Breast epithelium (tissue), 4 donors: ENCODE measurements at regions of chr3 and their contacts with region 1.

Region 1: GRCh38 chr3:187739561-187740332 is 5.5 kb downstream of the BCL6 start:
- DNase-seq: peak; percentile 79 to 89
- H3K4me3 ChIP-seq: peak overlapping the region; percentile 64 to 93 (median 73)
- H3K27ac ChIP-seq: peak overlapping the region; percentile 99
- H3K4me1 ChIP-seq: peaks cover 5 to 14% of the 10 kb centered on the region in 2 donors
- H3K27me3 ChIP-seq: no peaks in the 10 kb centered on the region
- CTCF ChIP-seq: peak; percentile 97 to 99 (median 99)
- POLR2A ChIP-seq: peak; percentile 10

Region 2: GRCh38 chr3:188947401-188948280 is 1207.9 kb after region 1 on chr3:
- intact Hi-C with region 1: loop called (anchors 5 kb)
- DNase-seq: peak; percentile 95 to 98
- H3K4me3 ChIP-seq: peak overlapping the region; percentile 32 to 65 (median 61)
- H3K27ac ChIP-seq: peak overlapping the region; percentile 99
- H3K4me1 ChIP-seq: peaks cover 5 to 37% of the 10 kb centered on the region in 2 donors
- H3K27me3 ChIP-seq: no peaks in the 10 kb centered on the region
- CTCF ChIP-seq: peak; percentile 61 to 82 (median 69)
- POLR2A ChIP-seq: peak; percentile 54